ENCODE measurements at regions of chr6 and their contacts with region 1.

Region 1: GRCh38 chr6:7615611-7616383 is 25.8 kb downstream of the SNRNP48 start:
- DNase-seq: no peak
- H3K4me3 ChIP-seq: no peak overlapping the region
- CTCF ChIP-seq: peak; percentile 61

Region 2: DNA sequence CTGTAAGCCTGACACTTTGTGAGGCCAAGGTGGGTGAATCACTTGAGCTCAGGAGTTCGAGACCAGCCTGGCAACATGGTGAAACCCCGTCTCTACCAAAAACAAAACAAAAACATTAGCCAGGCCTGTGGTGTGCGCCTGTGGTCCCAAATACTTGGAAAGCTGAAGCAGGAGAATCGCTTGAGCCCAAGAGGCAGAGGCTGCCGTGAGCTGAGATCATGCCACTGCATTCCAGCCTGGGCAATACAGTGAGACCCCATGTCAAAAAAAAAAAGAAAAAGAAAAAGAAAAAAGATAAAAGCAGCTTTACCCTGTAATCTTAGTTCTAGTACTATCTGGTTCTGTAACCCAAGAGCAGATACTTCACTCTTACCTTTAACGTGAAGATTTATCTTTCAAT is 330.4 kb before region 1 on chr6:
- CTCF ChIA-PET with region 1: interaction called, 149 read pairs
- POLR2A ChIA-PET with region 1: no interaction called
- DNase-seq: no peak
- H3K4me3 ChIP-seq: no peak overlapping the region
- CTCF ChIP-seq: no peak

Region 3: DNA sequence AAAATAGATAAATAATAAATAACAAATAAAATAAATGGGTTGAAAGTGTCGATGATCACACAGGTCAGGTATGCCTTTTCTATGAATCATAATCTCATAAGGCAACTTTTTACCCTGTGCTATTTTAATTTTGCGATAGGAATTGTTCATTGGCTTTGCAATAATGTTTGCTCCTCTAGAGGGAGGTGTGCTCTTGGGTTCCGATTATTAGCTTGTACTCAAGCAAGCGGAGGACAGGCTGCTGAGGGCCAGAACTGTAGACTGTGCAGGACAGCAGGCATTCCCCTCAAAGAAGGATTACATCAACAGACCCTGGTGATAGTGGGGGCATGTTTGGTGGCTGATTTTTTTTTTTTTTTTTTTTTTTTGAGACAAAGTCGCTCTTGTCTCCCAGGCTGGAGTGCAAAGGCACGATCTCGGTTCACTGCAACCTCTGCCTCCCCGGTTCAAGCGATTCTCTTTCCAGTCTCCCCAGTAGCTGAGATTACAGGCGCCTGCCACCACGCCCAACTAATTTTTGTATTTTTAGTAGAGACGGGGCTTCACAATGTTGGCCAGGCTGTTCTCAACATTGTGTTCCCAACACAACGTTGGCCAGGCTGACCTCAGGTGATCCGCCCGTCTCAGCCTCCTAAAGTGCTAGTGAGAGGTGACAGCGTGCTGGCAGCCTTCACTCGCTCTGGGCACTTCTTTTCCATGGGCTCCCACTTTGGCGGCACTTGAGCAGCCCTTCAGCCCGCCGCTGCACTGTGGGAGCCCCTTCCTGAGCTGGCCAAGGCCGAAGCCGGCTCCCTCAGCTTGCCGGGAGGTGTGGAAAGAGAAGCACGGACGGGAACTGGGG is 190.6 kb before region 1 on chr6:
- CTCF ChIA-PET with region 1: interaction called, 14 read pairs
- POLR2A ChIA-PET with region 1: no interaction called
- DNase-seq: no peak
- H3K4me3 ChIP-seq: no peak overlapping the region
- CTCF ChIP-seq: peak; percentile 43

Region 4: GRCh38 chr6:7589949-7590917 is 25.6 kb before region 1 on chr6 and contains the start of gene SNRNP48:
- CTCF ChIA-PET with region 1: interaction called, 10 read pairs
- POLR2A ChIA-PET with region 1: no interaction called
- DNase-seq: peak; percentile 54
- H3K4me3 ChIP-seq: peak within 1 kb of the TSS; percentile 81
- CTCF ChIP-seq: no peak

Region 5: DNA sequence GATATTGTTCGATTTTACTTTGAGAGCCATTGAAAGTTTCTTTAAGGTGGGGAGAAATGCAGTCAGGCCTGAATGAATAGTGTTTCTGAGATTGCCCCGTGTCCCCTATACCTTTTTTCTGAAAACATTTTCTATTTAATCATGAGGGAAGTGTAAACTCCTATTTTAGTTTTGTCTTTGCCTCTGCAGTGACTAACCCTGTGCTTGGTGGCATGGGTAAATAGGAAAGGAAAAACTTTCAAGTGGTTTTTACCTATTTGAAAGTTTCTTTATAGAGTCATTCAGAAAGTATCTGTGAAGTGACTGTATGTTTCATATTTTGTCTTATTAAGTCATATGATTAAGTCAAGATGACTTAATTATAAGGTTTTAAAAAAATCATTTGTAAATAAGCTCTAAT is 11.3 kb before region 1 on chr6:
- CTCF ChIA-PET with region 1: interaction called, 16 read pairs
- POLR2A ChIA-PET with region 1: no interaction called
- DNase-seq: no peak
- H3K4me3 ChIP-seq: no peak overlapping the region
- CTCF ChIP-seq: no peak